ENCODE measurements at regions of chr1 and their contacts with region 1.

Region 1: DNA sequence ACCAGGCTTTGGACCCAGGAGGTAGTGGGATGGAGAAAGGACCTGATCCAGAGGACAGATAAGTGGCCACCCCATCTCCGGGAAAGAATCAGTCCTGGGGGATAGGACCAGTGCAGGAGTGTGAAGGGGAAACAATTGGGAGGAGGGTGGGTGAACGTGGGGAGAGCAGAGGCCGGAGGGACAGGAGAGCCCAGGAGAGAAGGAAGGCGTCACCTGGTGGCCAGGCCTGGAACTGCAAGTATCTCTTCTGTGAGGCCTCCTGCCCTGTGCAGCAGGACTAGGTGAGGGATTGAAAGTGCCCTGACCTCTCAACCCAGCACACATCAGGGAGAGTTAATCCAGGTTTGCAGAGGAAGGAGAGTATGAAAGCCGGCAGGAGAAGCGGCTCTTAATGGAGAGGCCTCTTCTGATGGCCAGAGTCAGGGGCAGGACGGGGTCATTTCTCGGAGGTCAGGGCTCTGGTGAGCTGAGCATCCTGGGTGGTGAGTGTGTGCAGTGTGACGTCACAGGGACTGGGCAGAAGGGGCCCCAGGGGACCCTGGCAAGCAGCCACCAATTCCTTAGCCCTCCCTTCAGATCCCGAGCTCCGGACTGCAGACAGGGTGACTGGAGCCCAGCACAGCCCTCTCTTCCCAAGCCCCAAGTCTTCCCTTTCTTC is 9.2 kb upstream of the LAD1 start:
- DNase-seq: peak; percentile 10
- H3K4me3 ChIP-seq: no peak overlapping the region
- CTCF ChIP-seq: peak; percentile 99

Region 2: DNA sequence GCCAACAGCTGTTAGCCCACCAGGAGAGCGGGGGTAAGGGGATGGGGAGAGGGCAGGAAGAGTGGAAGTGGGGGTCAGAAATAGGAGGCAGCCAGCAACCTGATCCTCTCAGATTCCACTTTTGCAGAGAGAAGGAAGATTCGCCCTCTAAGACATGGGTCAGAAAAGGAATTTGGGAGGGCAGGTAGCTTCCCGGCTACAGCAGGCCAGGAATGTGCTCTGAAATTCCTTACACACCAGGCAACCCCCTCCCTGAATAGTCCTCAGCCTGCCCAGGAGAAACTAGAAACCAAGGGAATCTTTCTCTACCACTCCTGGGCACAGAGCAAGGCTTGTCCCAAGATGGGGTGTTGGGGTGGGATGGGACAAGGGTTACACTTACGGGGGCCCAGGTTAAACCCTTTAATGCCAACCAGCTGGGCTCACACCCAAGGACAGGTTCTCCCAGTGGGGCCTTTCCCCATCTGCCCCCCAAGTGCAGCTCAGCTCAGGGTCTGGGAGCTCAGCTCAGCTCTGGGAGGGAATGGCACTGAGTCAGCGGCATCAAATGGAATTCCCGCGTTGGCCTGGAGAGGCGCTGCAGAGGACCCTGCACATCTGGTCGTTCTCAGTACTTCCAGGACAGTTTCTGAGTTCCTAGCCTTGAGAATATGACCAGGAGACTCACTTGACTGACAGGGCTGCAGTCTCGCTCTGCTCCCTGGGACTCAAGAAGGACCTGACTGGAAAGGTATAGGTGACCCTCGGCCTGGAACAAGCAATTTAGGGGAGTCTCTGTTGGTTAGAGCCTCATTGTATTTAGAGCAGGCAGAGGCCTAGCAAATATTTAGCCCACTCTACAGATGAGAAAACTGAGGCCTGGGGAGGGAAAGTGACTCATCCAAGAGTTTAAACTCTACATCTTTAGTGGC is 31.6 kb before region 1 on chr1:
- CTCF ChIA-PET with region 1: interaction called, 19 read pairs
- POLR2A ChIA-PET with region 1: no interaction called
- DNase-seq: no peak
- H3K4me3 ChIP-seq: no peak overlapping the region
- CTCF ChIP-seq: peak; percentile 83

Region 3: DNA sequence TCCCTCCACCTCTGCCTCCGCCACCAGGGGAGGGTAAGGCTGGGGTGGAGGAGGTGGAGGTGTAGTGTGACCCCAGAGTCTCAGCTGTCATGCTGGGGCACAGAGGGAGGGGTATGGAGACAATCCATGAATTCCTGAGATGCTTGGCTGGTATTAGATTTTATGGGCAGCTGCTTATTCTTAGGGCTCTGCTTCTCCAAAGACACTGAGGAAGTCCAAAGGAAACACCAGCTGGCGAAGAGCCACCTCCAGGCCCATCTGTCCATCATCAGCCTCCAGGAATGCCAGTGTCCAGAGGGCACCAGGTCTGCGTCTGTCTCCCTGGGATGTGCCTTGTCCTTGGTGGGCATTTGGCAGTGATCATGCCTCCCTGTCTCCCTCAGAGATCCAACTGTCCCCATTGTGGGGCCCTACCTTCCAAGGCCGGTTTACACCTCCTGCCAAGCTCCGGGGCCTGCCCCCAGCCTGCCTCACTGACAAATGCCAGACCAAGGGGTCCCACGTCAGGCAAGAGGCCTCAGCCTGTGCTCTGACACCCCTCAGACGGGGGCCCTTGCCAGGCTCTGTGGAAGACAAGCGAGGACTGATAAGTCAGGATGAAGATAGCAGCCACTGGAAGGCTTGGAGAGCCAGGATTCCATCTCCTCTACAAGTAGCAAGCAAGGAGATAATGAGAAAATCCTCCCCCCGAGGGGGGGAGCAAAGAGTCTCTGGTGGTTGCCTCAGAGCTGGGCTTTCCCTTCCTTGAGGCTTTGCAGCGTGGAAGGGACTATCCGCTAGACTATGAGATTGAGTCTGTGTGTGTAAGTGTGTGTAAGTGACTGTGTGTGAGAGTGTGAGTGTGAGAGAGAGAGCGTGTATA is 11.7 kb after region 1 on chr1:
- CTCF ChIA-PET with region 1: interaction called, 43 read pairs
- POLR2A ChIA-PET with region 1: no interaction called
- DNase-seq: no peak
- H3K4me3 ChIP-seq: no peak overlapping the region
- CTCF ChIP-seq: no peak

Region 4: DNA sequence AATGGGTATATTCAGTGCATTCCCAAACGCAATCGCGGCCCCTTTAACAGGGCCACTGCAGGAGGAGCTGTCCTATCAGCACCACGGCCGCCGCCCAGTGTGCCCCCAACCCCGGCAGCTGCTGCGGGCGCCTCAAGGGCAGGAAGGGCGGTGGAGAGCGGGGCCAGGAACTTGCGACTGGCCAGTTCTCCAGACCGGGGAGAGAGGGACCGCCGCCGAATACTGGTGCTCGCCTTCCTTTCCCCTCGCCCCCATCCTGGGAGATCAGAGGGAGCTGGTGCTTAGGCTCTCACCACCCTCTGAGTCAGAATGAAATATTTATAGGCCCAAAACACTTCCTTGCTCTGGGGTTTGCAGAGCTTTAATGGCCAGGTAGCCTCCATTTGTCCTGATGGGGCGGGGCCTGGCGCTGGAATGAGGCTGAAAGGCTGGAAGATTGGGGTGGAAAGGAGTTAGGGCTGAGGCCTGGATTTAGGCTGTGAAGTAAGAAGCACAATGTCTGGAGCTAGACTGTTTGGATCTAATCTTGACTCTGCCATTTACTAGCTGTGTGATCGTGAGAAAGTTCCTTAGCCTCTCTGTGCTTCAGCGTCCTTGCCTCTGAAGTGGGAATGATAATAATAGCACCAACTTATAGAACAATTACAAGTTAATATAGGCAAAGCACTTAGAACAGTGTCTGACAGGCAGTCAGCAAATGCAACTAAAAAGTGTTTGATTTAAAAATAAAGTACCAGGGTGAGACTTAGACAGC is 206.1 kb after region 1 on chr1:
- CTCF ChIA-PET with region 1: no interaction called
- POLR2A ChIA-PET with region 1: no interaction called
- DNase-seq: no peak
- H3K4me3 ChIP-seq: no peak overlapping the region
- CTCF ChIP-seq: no peak

Measured in AG04449 (cell line).